Naive thymus-derived CD8-positive, alpha-beta T cell (primary cell): ENCODE measurements at regions of chr2 and their contacts with region 1.

Region 1: DNA sequence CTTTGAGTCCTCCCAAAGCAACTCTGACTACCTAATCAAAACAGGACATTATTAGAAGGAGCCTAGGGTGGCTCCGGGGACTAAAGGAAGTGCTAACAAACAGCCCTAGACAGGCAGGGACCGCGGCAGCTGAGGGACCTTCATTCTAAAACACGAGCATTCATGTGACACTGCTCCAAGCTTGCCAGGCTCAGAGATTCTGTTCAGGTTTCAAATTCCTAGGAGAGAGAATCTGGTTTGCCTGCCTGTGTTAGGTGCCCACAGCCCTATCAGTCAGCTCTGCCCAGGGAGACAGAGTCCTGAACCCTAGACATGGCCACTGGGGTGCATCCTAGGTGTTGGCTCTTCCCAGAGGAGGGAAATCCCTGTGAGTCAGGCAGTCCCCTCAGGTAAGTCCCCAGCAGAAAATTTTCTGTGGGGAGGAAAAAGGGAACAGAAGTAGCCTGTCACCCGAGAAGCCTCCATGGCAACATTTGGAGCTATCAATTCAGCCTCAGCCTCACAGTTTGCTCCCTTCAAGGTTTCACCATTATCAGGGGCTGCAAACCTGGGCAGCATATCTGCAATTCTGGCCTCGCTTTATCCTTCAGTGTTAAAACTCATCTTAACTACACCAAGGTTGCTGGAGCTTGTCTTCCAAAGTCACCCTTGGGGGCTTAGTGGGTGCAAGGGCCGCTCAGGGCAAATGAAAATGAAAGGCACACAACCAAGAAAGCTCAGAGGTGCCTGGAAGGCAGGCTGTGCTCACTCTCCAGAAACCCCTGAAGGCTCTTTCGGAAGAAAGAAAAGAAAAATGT is 28.6 kb downstream of the PCBP1 start:
- DNase-seq: no peak
- ATAC-seq: peak; percentile 53 to 55
- H3K4me3 Mint-ChIP-seq: peak overlapping the region; percentile 12 to 61 (median 29)
- H3K27ac Mint-ChIP-seq: peak overlapping the region in 8 of 10 donors; percentile 27 to 86 (median 63)
- H3K4me1 Mint-ChIP-seq: peaks cover 17 to 67% (median 58%) of the 10 kb centered on the region in 4 donors
- H3K27me3 Mint-ChIP-seq: no peaks in the 10 kb centered on the region

Region 2: GRCh38 chr2:69936906-69937305 is 178.9 kb before region 1 on chr2:
- POLR2A ChIA-PET with region 1: no interaction called
- DNase-seq: no peak
- ATAC-seq: no peak
- H3K4me3 Mint-ChIP-seq: no peak overlapping the region
- H3K27ac Mint-ChIP-seq: peak overlapping the region in 2 of 10 donors; percentile 38 to 61
- H3K4me1 Mint-ChIP-seq: peaks cover 13 to 22% (median 16%) of the 10 kb centered on the region in 4 donors
- H3K27me3 Mint-ChIP-seq: no peaks in the 10 kb centered on the region

Region 3: DNA sequence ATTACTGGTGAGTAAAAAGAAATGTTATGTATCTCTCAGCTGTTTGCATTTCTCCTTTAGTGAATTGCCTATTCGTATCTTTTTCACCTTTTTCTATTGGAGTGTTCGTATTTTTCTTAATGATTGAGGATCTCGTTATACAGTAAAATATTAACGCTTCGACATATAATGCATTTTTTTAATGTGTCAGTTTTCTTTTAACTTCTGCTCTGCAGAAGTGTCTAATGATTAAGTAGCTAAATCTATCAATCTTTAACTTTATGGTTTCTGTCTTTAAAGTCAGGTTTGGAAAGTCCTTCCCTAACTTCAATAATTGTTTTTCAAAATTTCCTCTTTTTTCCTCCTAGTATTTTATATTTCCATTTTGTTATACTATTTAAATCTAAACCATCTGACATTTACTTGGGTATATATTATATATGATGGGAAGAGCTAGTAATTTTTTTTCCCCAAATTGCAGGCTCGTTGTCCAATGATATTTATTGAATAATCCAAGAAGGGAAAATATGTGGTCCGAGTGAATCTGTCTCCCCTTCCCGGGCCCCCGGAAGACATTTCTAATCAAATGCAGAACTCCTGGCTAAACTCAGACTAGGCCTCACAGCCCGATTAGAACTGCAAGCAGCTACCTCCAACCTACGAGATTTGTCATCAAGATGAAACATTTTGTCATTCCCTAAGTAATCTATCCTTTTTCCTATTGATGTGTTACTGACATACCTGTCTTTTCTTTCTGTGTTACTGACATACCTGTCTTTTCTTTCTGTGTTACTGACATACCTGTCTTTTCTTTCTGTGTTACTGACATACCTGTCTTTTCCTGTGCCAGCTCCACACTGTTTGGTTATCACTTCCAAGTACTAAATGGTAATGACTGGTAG is 11.4 kb before region 1 on chr2:
- POLR2A ChIA-PET with region 1: interaction called, 286 read pairs
- DNase-seq: peak in 3 of 10 donors; percentile 45 to 69 (median 48)
- ATAC-seq: no peak
- H3K4me3 Mint-ChIP-seq: peak overlapping the region; percentile 76 to 89 (median 84)
- H3K27ac Mint-ChIP-seq: peak overlapping the region; percentile 91 to 99 (median 96)
- H3K4me1 Mint-ChIP-seq: peaks cover 32 to 59% (median 57%) of the 10 kb centered on the region in 4 donors
- H3K27me3 Mint-ChIP-seq: no peaks in the 10 kb centered on the region

Region 4: GRCh38 chr2:70132244-70133126 is 16.6 kb after region 1 on chr2:
- POLR2A ChIA-PET with region 1: interaction called, 600 read pairs
- DNase-seq: peak in 6 of 10 donors; percentile 25 to 72 (median 56)
- ATAC-seq: peak; percentile 55 to 56
- H3K4me3 Mint-ChIP-seq: peak overlapping the region; percentile 83 to 90 (median 88)
- H3K27ac Mint-ChIP-seq: peak overlapping the region; percentile 92 to 100 (median 97)
- H3K4me1 Mint-ChIP-seq: peaks cover 40 to 87% (median 81%) of the 10 kb centered on the region in 4 donors
- H3K27me3 Mint-ChIP-seq: no peaks in the 10 kb centered on the region